ENCODE measurements at regions of chr12 and their contacts with region 1.

Region 1: GRCh38 chr12:41277116-41277945 is 89.2 kb downstream of the PDZRN4 start:
- DNase-seq: no peak
- ATAC-seq: peak in 1 of 8 donors; percentile 51
- H3K4me3 ChIP-seq: no peak overlapping the region
- H3K27ac ChIP-seq: no peak overlapping the region
- H3K4me1 ChIP-seq: peaks cover 0 to 8% (median 0%) of the 10 kb centered on the region in 9 donors
- H3K27me3 ChIP-seq: no peaks in the 10 kb centered on the region
- CTCF ChIP-seq: peak; percentile 22 to 76 (median 68)

Region 2: GRCh38 chr12:41162461-41162860 is 114.9 kb before region 1 on chr12:
- intact Hi-C with region 1: no loop called
- DNase-seq: no peak
- ATAC-seq: no peak
- H3K4me3 ChIP-seq: no peak overlapping the region
- H3K27ac ChIP-seq: no peak overlapping the region
- H3K4me1 ChIP-seq: no peaks in the 10 kb centered on the region
- H3K27me3 ChIP-seq: no peaks in the 10 kb centered on the region
- CTCF ChIP-seq: no peak

Region 3: GRCh38 chr12:41437563-41437962 is 160.2 kb after region 1 on chr12:
- intact Hi-C with region 1: no loop called
- DNase-seq: no peak
- ATAC-seq: no peak
- H3K4me3 ChIP-seq: no peak overlapping the region
- H3K27ac ChIP-seq: no peak overlapping the region
- H3K4me1 ChIP-seq: no peaks in the 10 kb centered on the region
- H3K27me3 ChIP-seq: peaks cover 0 to 4% (median 0%) of the 10 kb centered on the region in 7 donors
- CTCF ChIP-seq: no peak

Region 4: GRCh38 chr12:41663598-41664258 is 386.4 kb after region 1 on chr12:
- intact Hi-C with region 1: loop called in 4 of 10 experiments (anchors 10 kb)
- DNase-seq: no peak
- ATAC-seq: no peak
- H3K4me3 ChIP-seq: no peak overlapping the region
- H3K27ac ChIP-seq: no peak overlapping the region
- H3K4me1 ChIP-seq: peaks cover 0 to 5% (median 0%) of the 10 kb centered on the region in 9 donors
- H3K27me3 ChIP-seq: no peaks in the 10 kb centered on the region
- CTCF ChIP-seq: peak in 7 of 9 donors; percentile 31 to 60 (median 46)

Region 5: GRCh38 chr12:42332301-42333285 is 1055.3 kb after region 1 on chr12:
- intact Hi-C with region 1: loop called in 1 of 10 experiments (anchors 10 kb)
- DNase-seq: peak in 1 of 2 donors; percentile 42
- ATAC-seq: peak in 4 of 8 donors; percentile 44 to 61 (median 57)
- H3K4me3 ChIP-seq: no peak overlapping the region
- H3K27ac ChIP-seq: no peak overlapping the region
- H3K4me1 ChIP-seq: peaks cover 0 to 26% (median 12%) of the 10 kb centered on the region in 9 donors
- H3K27me3 ChIP-seq: no peaks in the 10 kb centered on the region
- CTCF ChIP-seq: peak; percentile 37 to 83 (median 69)